Adrenal gland (tissue), 19 donors: ENCODE measurements at regions of chr1 and their contacts with region 1.

Region 1: GRCh38 chr1:91885716-91886506 is at the start of gene TGFBR3:
- DNase-seq: peak; percentile 94 to 98 (median 96)
- H3K4me3 ChIP-seq: peak within 1 kb of the TSS; percentile 64 to 90 (median 75)
- H3K27ac ChIP-seq: peak within 1 kb of the TSS; percentile 91 to 98 (median 94)
- H3K4me1 ChIP-seq: peaks cover 25 to 31% of the 10 kb centered on the region in 2 donors
- H3K27me3 ChIP-seq: no peaks in the 10 kb centered on the region
- CTCF ChIP-seq: peak; percentile 21 to 73 (median 50)
- POLR2A ChIP-seq: peak; percentile 79 to 98
- total RNA-seq, gene TGFBR3: 95.5 to 340 (median 159) TPM

Region 2: DNA sequence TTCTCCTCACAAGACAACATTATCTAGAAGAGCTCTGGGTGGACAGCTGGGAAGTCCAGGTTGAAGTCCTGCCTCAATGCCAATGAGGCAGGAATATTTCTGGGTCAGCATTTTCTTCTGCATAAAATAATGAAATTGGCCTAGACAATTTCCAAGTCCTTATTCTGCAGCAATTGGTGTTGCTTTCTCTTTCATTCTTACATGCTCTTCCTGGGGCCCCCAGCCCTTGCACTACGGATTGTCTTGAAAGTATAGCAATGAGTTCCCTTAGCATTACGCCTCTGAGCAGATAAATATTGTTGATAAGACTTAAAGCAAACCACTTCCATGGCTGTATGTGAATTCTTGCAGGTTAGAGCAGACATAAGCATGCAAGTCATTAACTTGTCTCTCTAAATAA is 188.5 kb before region 1 on chr1:
- intact Hi-C with region 1: loop called in 1 of 2 experiments (anchors 10 kb)
- DNase-seq: no peak
- H3K4me3 ChIP-seq: no peak overlapping the region
- H3K27ac ChIP-seq: peak overlapping the region in 4 of 5 donors; percentile 36 to 87 (median 56)
- H3K4me1 ChIP-seq: peaks cover 52 to 67% of the 10 kb centered on the region in 2 donors
- H3K27me3 ChIP-seq: no peaks in the 10 kb centered on the region
- CTCF ChIP-seq: no peak
- POLR2A ChIP-seq: no peak

Region 3: GRCh38 chr1:91929250-91929649 is 43.3 kb after region 1 on chr1:
- intact Hi-C with region 1: loop called in 1 of 2 experiments (anchors 5 kb)
- DNase-seq: peak in 6 of 7 donors; percentile 26 to 78 (median 60)
- H3K4me3 ChIP-seq: no peak overlapping the region
- H3K27ac ChIP-seq: no peak overlapping the region
- H3K4me1 ChIP-seq: peaks cover 3 to 6% of the 10 kb centered on the region in 2 donors
- H3K27me3 ChIP-seq: no peaks in the 10 kb centered on the region
- CTCF ChIP-seq: no peak
- POLR2A ChIP-seq: no peak